ENCODE measurements at regions of chrX and their contacts with region 1.

Region 1: DNA sequence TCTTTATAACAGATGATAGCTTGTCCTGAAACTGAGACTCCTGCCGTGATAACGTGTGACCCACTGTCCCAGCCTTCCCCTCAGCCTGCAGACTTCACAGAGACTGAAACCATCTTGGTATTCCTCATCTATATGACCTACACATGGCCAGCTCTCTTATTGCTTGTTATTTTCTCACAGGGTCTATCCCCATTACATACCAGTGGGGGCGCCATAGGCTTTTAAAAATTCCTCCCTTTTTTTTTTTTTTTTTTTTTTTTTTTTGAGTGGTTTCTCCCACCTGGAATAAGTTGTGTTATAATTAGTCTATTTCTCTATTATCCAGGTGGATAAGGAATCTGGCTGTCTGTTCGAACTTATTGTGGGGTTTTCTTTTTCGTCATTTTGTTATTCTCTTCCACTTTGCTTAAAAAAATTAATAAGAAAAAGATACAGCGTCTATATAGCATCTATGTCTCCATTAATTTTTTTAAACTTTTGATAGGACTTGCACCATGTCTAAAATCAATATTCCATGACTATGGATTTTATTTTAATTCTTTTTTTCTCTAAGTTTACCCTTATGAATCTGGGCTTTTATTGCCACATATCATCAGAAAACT is 47.2 kb downstream of the GYG2 start:
- DNase-seq: peak; percentile 57
- H3K4me3 ChIP-seq: no peak overlapping the region
- H3K27ac ChIP-seq: no peak overlapping the region
- H3K4me1 ChIP-seq: peaks cover 6% of the 10 kb centered on the region
- H3K27me3 ChIP-seq: no peaks in the 10 kb centered on the region
- CTCF ChIP-seq: peak; percentile 86

Region 2: GRCh38 chrX:2819345-2820135 is 56.4 kb before region 1 on chrX:
- CTCF ChIA-PET with region 1: interaction called, 14 read pairs
- POLR2A ChIA-PET with region 1: no interaction called
- intact Hi-C with region 1: no loop called
- DNase-seq: peak; percentile 79
- H3K4me3 ChIP-seq: no peak overlapping the region
- H3K27ac ChIP-seq: peak overlapping the region; percentile 91
- H3K4me1 ChIP-seq: peaks cover 49% of the 10 kb centered on the region
- H3K27me3 ChIP-seq: no peaks in the 10 kb centered on the region
- CTCF ChIP-seq: peak; percentile 77

Region 3: DNA sequence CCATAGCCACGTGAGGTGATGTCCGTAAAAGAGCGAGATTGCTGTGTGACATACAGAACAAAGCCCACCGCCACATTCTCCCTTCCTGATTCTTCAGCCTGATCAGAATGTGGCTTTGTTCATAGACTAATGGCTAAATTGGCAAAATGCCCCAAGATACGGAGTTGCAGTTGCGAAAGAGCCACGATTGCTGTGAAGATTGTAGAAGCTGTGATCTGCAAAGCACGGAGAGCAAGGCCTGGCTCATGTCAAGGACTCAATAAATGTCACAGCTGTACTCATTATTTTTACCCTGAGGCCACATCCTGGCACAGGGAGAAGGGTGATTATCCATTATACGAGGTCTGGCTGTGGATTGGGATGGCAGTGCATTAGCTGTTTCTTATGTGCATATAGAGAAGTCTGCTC is 19.0 kb after region 1 on chrX:
- CTCF ChIA-PET with region 1: no interaction called
- POLR2A ChIA-PET with region 1: interaction called, 10 read pairs
- intact Hi-C with region 1: no loop called
- DNase-seq: peak; percentile 97
- H3K4me3 ChIP-seq: no peak overlapping the region
- H3K27ac ChIP-seq: peak overlapping the region; percentile 70
- H3K4me1 ChIP-seq: peaks cover 32% of the 10 kb centered on the region
- H3K27me3 ChIP-seq: no peaks in the 10 kb centered on the region
- CTCF ChIP-seq: no peak

Region 4: DNA sequence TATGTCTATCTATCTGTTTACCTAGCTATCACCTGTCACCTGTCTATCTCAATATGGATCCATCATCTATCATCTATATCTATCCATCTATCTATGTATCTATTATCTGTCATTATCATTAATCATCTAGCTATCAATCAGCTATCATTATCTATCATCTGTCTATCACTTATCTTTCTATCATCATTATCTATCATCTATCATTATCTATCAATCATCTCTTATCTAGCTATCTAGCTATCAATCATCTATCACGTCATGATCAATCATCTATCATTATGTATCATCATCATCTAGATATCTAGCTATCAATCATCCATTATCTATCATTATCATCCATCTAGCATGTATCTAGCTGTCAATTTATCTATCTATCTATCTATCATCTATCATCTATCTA is 45.3 kb after region 1 on chrX:
- CTCF ChIA-PET with region 1: interaction called, 13 read pairs
- POLR2A ChIA-PET with region 1: no interaction called
- intact Hi-C with region 1: no loop called
- DNase-seq: no peak
- H3K4me3 ChIP-seq: no peak overlapping the region
- H3K27ac ChIP-seq: no peak overlapping the region
- H3K4me1 ChIP-seq: no peaks in the 10 kb centered on the region
- H3K27me3 ChIP-seq: no peaks in the 10 kb centered on the region
- CTCF ChIP-seq: no peak

Region 5: GRCh38 chrX:2928191-2928763 is 52.4 kb after region 1 on chrX:
- CTCF ChIA-PET with region 1: interaction called, 12 read pairs
- POLR2A ChIA-PET with region 1: no interaction called
- intact Hi-C with region 1: no loop called
- DNase-seq: no peak
- H3K4me3 ChIP-seq: peak overlapping the region; percentile 56
- H3K27ac ChIP-seq: no peak overlapping the region
- H3K4me1 ChIP-seq: no peaks in the 10 kb centered on the region
- H3K27me3 ChIP-seq: peaks cover 6% of the 10 kb centered on the region
- CTCF ChIP-seq: no peak

Region 6: GRCh38 chrX:3252744-3253143 is 376.8 kb after region 1 on chrX:
- CTCF ChIA-PET with region 1: interaction called, 19 read pairs
- POLR2A ChIA-PET with region 1: no interaction called
- intact Hi-C with region 1: no loop called
- DNase-seq: no peak
- H3K4me3 ChIP-seq: no peak overlapping the region
- H3K27ac ChIP-seq: no peak overlapping the region
- H3K4me1 ChIP-seq: no peaks in the 10 kb centered on the region
- H3K27me3 ChIP-seq: no peaks in the 10 kb centered on the region
- CTCF ChIP-seq: no peak

Region 7: DNA sequence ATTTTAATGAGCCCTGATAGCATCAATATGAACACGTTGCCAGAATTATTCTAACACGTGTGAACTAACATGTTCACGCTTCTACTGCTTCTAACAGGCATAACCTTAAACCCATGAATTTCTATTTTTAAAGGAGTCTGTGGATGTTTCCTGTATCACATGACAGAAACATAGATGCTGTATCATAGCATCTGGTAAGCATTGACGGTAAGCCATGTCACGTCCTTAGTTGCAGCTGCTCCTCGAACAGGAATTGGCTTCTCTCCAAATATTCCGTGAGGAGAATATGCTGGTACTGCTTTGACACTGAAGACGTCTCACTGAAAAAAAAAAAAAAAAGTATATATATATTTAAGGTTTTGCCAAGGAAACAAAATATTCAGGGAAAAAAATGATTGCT is 575.7 kb after region 1 on chrX:
- CTCF ChIA-PET with region 1: no interaction called
- POLR2A ChIA-PET with region 1: no interaction called
- intact Hi-C with region 1: no loop called
- DNase-seq: no peak
- H3K4me3 ChIP-seq: no peak overlapping the region
- H3K27ac ChIP-seq: no peak overlapping the region
- H3K4me1 ChIP-seq: no peaks in the 10 kb centered on the region
- H3K27me3 ChIP-seq: no peaks in the 10 kb centered on the region
- CTCF ChIP-seq: no peak